ENCODE measurements at regions of chr1 and their contacts with region 1.

Region 1: GRCh38 chr1:158998781-158999161 is 10.9 kb upstream of the IFI16 start:
- DNase-seq: peak in 1 of 2 donors; percentile 84
- ATAC-seq: peak; percentile 82 to 92 (median 89)
- H3K4me3 ChIP-seq: no peak overlapping the region
- H3K4me3 Mint-ChIP-seq: peak overlapping the region; percentile 42
- H3K27ac ChIP-seq: no peak overlapping the region
- H3K27ac Mint-ChIP-seq: peak overlapping the region; percentile 80 to 90
- H3K4me1 ChIP-seq: peaks cover 14% of the 10 kb centered on the region
- H3K4me1 Mint-ChIP-seq: peaks cover 46 to 50% of the 10 kb centered on the region in 2 donors
- H3K27me3 ChIP-seq: no peaks in the 10 kb centered on the region
- H3K27me3 Mint-ChIP-seq: no peaks in the 10 kb centered on the region
- CTCF ChIP-seq: peak; percentile 97

Region 2: DNA sequence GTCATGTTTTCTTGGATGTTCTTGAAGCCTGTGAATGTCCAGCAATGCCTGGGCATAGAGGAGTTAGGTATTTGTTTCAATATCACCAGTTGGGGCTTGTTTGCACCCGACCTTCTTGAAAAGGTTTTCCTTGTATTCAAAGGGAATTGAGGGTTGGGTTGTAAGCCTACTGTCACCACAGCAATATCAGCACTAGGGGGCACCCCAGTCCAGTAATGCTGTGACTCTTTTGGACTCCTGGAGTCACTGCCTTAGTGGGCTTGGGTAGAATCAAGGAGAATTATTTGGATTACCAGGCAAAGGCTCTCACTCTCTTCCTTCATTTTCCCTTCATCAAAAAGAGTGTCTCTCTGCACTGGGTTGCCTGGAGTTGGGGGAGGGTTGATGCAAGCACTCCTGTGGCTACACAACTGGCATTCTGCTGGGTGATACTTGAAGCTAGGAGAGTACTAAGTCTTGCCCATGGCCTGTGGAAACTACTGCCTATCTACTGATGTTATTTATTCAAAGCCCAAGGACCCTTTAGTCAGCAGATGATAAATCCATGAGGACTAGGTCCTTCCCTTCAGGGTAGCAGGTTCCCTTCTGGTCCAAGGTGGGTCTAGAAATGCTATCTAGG is 492.3 kb before region 1 on chr1:
- intact Hi-C with region 1: loop called (anchors 1 kb)
- DNase-seq: peak in 1 of 2 donors; percentile 57
- ATAC-seq: peak; percentile 50 to 75 (median 63)
- H3K4me3 ChIP-seq: no peak overlapping the region
- H3K4me3 Mint-ChIP-seq: no peak overlapping the region
- H3K27ac ChIP-seq: no peak overlapping the region
- H3K27ac Mint-ChIP-seq: no peak overlapping the region
- H3K4me1 ChIP-seq: no peaks in the 10 kb centered on the region
- H3K4me1 Mint-ChIP-seq: no peaks in the 10 kb centered on the region
- H3K27me3 ChIP-seq: peaks cover 3% of the 10 kb centered on the region
- H3K27me3 Mint-ChIP-seq: peaks cover 28 to 54% of the 10 kb centered on the region in 2 donors
- CTCF ChIP-seq: peak; percentile 63

Region 3: DNA sequence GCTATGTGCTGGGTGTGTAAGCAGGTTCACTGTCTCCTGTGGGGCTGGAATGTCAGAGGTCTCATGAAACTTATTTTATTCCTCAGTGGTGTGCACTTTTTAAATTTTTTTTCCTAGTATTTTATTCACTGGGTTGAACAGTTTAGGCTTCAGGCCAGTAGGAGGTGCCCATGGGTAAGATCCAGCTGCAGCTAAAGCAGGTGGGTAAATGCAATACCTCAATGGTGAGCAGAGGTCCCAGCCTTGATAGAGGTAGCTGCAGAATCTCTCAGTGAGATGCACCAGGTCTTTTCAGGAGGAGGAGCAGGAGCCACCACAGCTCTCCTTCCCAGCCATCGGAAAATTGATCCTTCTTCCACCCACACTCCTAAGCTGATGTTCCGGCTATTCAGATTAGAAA is 205.2 kb before region 1 on chr1:
- intact Hi-C with region 1: loop called (anchors 1 kb)
- DNase-seq: peak in 1 of 2 donors; percentile 61
- ATAC-seq: peak; percentile 64 to 70 (median 65)
- H3K4me3 ChIP-seq: no peak overlapping the region
- H3K4me3 Mint-ChIP-seq: no peak overlapping the region
- H3K27ac ChIP-seq: no peak overlapping the region
- H3K27ac Mint-ChIP-seq: no peak overlapping the region
- H3K4me1 ChIP-seq: no peaks in the 10 kb centered on the region
- H3K4me1 Mint-ChIP-seq: peaks cover 13% of the 10 kb centered on the region in 2 donors
- H3K27me3 ChIP-seq: no peaks in the 10 kb centered on the region
- H3K27me3 Mint-ChIP-seq: no peaks in the 10 kb centered on the region
- CTCF ChIP-seq: peak; percentile 59